GM12878 (cell line): ENCODE measurements at regions of chr7 and their contacts with region 1.

Region 1: GRCh38 chr7:65251851-65252620 is 121.6 kb upstream of the ZNF92 start:
- DNase-seq: peak; percentile 27
- ATAC-seq: peak; percentile 95
- H3K4me3 ChIP-seq: peak overlapping the region; percentile 56
- H3K27ac ChIP-seq: no peak overlapping the region; the same call in 1 of the 2 replicates
- H3K4me1 ChIP-seq: no peaks in the 10 kb centered on the region
- H3K27me3 ChIP-seq: no peaks in the 10 kb centered on the region
- CTCF ChIP-seq: no peak
- EP300 ChIP-seq: no peak
- POLR2A ChIP-seq: peak; percentile 54; the same call in 1 of the 2 replicates
- RAD21 ChIP-seq: no peak

Region 2: DNA sequence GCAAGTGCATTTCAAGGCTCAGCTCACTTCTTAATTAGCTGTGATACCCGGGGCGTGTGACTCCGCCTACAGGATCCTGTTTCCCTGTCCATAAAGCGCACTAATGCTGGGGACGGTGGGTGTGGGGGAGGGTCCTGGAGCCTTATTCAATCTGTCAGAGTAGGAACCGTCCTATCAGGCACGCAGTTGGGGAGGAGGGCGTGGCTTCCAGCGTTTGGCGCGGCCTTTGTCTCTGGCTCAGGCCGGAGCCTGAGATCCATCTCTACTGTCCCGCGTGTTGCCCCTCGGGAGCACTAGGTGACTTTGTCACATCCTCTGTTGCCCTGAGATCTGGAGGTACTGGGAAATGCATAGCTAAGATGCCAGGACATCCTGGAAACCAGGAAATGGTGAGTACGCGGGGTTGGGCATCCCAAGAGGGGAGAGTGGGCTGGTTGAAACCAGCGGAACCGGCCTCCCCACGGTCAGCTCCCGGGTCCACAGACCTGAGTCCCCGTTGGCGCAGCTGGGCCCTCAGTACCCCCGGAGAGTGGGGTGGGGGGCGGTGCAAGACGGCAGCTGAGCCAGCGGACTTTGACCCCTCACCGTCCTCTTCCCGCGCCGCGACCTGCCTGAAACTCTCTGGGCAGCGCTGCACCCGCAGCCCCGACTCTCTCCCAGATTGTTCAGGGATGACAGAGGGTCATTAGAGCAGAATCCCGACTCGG is 17.3 kb after region 1 on chr7:
- CTCF ChIA-PET with region 1: no interaction called
- POLR2A ChIA-PET with region 1: interaction called, 10 read pairs
- RAD21 ChIA-PET with region 1: interaction called, 3 read pairs
- SMC1A ChIA-PET with region 1: interaction called, 6 read pairs
- in situ Hi-C with region 1: no loop called
- intact Hi-C with region 1: no loop called
- DNase-seq: peak; percentile 73
- ATAC-seq: peak; percentile 99
- H3K4me3 ChIP-seq: peak overlapping the region; percentile 75
- H3K27ac ChIP-seq: peak overlapping the region; percentile 61; the same call in 1 of the 2 replicates
- H3K4me1 ChIP-seq: no peaks in the 10 kb centered on the region
- H3K27me3 ChIP-seq: no peaks in the 10 kb centered on the region
- CTCF ChIP-seq: no peak
- EP300 ChIP-seq: no peak
- POLR2A ChIP-seq: peak; percentile 74
- RAD21 ChIP-seq: no peak